ENCODE measurements at regions of chr9 and their contacts with region 1.

Region 1: DNA sequence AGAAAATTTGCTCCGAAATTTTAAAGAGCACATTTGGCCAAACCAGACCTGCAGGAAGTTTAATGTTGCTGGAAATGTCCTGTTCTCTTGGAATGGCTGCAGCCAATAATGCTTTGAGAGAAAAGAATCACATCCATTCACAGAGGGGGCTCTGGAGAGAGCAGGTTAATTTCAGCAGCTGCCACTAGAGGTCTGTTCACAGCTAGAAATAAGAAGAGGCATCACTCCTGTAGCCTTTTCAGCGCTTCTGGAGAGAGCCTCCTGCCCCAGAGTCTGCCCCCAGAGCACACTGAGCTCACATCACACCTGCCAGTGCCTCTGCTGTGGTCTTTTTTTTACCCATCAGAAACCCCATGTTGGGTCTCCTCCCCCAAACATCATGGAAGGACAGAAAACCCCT is 124.8 kb upstream of the RAD23B start:
- DNase-seq: no peak

Region 2: GRCh38 chr9:106179154-106179553 is 979.2 kb before region 1 on chr9:
- intact Hi-C with region 1: no loop called
- DNase-seq: no peak

Region 3: DNA sequence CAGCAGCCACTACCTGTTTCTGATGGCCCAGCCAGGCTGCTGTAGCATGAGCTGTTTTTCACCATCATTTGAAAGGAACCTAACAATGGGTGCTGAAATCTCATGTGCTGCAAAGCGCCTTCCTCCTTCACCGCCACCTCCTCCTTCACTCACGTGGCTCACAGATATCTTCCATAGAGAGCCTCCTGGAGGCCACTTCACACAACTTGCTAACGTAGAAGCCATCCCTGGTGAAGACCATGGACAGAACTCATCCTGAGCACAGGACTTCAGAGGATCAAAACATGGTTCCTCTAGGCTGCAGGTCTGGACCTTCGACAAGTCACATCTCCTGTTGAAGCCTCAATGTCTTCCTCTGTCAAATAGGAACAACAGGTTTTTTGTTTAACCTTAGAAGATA is 30.7 kb before region 1 on chr9:
- intact Hi-C with region 1: loop called in 1 of 2 experiments (anchors 1 kb)
- DNase-seq: no peak